PC-3 (cell line): ENCODE measurements at regions of chr6 and their contacts with region 1.

Region 1: GRCh38 chr6:27332692-27333641 is 20.9 kb upstream of the POM121L2 start:
- DNase-seq: peak; percentile 77
- ATAC-seq: peak; percentile 91
- H3K4me3 ChIP-seq: peak overlapping the region; percentile 76
- H3K27ac ChIP-seq: no peak overlapping the region
- H3K4me1 ChIP-seq: no peaks in the 10 kb centered on the region
- H3K27me3 ChIP-seq: no peaks in the 10 kb centered on the region
- CTCF ChIP-seq: no peak

Region 2: DNA sequence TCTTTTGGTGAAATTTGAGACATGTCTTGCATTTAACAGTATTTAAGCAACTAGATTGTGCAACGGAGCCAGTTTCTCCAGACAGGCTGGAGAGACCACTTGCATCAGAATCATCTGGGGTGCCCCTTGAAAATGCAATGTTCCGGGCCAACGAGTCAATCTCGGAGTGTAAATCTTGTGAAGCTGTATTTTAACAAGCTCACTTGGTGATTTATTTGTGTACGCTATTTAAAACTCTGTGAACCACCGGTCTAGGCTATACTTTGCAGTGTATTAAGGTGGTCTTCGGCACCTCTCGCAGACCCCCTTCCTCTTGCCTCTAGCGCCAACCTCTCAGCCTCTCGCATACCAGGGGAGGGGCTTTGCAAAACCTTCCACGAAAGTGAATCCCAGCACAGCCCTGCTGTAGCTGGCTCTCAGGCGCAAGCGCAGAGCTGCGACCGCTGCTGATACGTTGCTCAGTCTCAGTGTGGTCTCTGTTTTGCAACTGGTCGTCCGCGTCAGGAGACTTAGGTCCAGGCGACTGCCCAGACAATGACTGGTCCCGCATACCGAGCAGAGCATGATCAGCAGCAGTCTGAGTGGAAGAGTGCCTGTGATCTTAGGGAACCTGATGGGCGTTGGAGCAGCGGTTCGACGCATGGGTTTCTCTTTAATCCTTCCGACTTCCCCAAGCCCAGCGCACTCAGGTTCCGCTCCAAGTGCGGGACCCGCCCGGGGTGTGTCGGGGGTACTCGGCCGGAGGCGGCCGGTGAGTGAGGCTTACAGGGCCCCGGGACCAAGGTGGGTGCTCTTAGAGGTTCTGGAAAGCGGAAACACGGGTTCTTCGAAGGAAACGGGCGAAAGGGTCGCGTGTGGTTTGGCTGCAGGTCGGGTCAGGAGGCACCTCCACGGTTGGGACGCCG is 55.6 kb after region 1 on chr6 and contains the start of gene ZNF391:
- CTCF ChIA-PET with region 1: no interaction called
- POLR2A ChIA-PET with region 1: no interaction called
- intact Hi-C with region 1: loop called (anchors 5 kb)
- DNase-seq: peak; percentile 79
- ATAC-seq: peak; percentile 94
- H3K4me3 ChIP-seq: peak within 1 kb of the TSS; percentile 86
- H3K27ac ChIP-seq: peak within 1 kb of the TSS; percentile 62
- H3K4me1 ChIP-seq: peaks cover 9% of the 10 kb centered on the region
- H3K27me3 ChIP-seq: no peaks in the 10 kb centered on the region
- CTCF ChIP-seq: no peak
- total RNA-seq, gene ZNF391: 1.7 and 5.9 TPM in 2 replicates

Region 3: GRCh38 chr6:27479319-27480182 is 146.6 kb after region 1 on chr6:
- CTCF ChIA-PET with region 1: no interaction called
- POLR2A ChIA-PET with region 1: no interaction called
- intact Hi-C with region 1: loop called (anchors 5 kb)
- DNase-seq: peak; percentile 89
- ATAC-seq: peak; percentile 71
- H3K4me3 ChIP-seq: peak overlapping the region; percentile 83
- H3K27ac ChIP-seq: peak overlapping the region; percentile 81
- H3K4me1 ChIP-seq: peaks cover 8% of the 10 kb centered on the region; the same call in 1 of the 2 replicates
- H3K27me3 ChIP-seq: no peaks in the 10 kb centered on the region
- CTCF ChIP-seq: no peak